Activated CD4-positive, alpha-beta T cell treated with anti-CD3 and anti-CD28 coated beads, Interleukin-2, amount 10 ng/mL, durations not matched to agents 24 days and 14 days (primary cell): ENCODE measurements at regions of chr1 and their contacts with region 1.

Region 1: DNA sequence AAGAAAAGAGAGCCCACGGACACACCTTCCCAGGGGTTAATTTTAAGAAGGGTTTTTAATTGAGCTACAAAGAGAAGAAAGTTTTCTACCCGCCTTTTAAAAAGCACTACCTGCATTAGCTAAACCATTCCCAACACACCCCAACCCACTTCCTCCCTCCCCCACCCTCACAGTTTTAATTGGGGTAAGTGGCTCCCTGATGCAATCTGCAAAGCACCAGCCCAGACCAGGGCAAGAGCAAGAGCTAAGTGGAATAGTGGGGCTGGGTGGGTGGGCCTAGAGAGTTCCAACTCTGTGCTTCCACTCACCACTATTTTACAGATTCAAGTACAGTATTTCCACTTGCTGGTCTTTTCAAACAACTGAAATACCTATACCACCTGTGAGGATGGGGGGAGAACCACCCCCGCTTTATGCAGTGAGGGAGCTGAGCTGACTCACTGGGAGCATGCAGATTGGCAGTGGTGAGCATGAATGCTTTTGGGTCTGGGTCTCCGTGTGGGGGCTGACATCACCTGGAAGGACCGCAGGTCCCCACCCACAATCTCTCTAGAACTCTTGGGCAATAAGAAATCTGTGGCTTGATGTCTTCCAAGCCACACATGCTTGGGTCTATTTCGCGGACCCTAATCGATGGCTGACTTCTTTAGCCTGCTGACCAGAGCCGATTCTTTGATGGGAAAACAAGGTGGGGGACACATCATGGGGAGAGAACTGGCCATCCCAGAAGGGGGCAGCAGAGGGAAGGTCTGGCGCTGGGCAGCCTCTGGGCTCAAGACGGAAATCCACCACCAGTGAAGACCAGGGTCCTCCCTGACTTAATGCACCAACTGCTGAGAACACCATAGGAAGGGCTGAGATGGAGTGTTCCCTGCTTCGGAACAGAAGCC is 95.5 kb downstream of the SSBP3 start:
- DNase-seq: no peak
- H3K4me3 Mint-ChIP-seq: peak overlapping the region; percentile 51
- H3K27ac Mint-ChIP-seq: peak overlapping the region; percentile 84
- H3K4me1 Mint-ChIP-seq: peaks cover 57% of the 10 kb centered on the region
- H3K27me3 Mint-ChIP-seq: no peaks in the 10 kb centered on the region

Region 2: DNA sequence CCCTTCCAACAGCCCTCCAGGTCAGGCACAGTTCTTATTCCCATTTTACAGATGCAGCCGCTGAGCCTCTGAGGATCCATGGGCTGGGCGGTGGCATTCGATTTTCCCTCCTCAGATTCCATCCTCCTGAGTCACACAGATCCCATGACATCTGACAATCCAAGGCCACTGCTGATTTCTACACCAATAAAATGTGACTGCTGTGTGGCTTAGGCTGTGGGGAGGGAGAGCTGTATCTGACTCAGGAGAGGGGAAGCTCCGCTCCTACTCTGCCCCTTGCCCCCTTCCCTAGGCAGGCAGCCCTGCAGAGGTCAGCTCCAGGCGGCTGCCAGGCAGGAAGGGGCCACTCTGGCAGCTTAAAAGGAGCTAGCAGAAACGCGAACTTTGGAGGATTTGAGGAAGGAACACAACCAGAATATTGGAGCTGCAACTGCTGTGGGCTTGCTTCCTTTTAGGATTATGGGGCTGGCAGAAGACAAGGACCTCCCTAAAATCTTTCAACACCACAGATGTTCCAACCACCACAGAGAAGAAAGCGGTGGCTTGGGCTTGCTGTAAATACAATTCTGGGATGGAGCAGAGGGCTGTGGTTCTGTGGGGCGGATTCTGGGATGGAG is 60.8 kb before region 1 on chr1:
- intact Hi-C with region 1: no loop called
- DNase-seq: no peak
- H3K4me3 Mint-ChIP-seq: no peak overlapping the region
- H3K27ac Mint-ChIP-seq: peak overlapping the region; percentile 17
- H3K4me1 Mint-ChIP-seq: peaks cover 6% of the 10 kb centered on the region
- H3K27me3 Mint-ChIP-seq: no peaks in the 10 kb centered on the region

Region 3: DNA sequence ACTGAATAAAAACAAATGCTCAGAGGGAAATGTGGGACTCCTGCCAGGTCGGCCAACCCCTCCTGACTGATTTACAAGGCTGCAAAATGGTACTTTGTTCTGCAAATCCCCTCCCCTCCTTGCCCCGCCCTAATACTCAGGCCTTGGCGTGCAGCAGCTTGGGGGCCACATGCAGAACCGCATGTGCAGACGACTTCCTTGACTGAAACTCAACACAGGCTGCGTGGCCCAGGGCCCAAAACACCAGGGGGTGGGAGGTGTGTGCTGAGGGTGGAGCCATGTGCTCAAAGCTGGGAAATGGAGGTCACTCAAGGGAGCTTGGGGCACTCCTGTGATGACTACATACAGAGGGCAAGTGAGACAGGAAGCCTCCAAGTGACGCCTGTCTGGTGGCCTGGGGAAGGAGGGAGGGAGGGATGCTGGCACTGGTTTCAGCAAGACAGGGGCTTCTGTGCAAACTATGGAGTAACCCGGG is 23.5 kb before region 1 on chr1:
- intact Hi-C with region 1: loop called (anchors 2 kb)
- DNase-seq: peak; percentile 94
- H3K4me3 Mint-ChIP-seq: peak overlapping the region; percentile 81
- H3K27ac Mint-ChIP-seq: peak overlapping the region; percentile 97
- H3K4me1 Mint-ChIP-seq: peaks cover 83% of the 10 kb centered on the region
- H3K27me3 Mint-ChIP-seq: no peaks in the 10 kb centered on the region